Activated B cell treated with CpG ODN at 0.5 μM for 24 hours (primary cell): ENCODE measurements at regions of chr13 and their contacts with region 1.

Region 1: GRCh38 chr13:38530492-38530891 is 156.4 kb upstream of the FREM2 start:
- DNase-seq: no peak
- ATAC-seq: no peak
- H3K4me3 Mint-ChIP-seq: no peak overlapping the region
- H3K27ac Mint-ChIP-seq: no peak overlapping the region
- H3K4me1 Mint-ChIP-seq: no peaks in the 10 kb centered on the region
- H3K27me3 Mint-ChIP-seq: no peaks in the 10 kb centered on the region
- CTCF ChIP-seq: no peak

Region 2: GRCh38 chr13:36858290-36858689 is 1672.2 kb before region 1 on chr13:
- CTCF ChIA-PET with region 1: no interaction called
- POLR2A ChIA-PET with region 1: no interaction called
- intact Hi-C with region 1: loop called (anchors 2 kb)
- DNase-seq: no peak
- ATAC-seq: no peak
- H3K4me3 Mint-ChIP-seq: no peak overlapping the region
- H3K27ac Mint-ChIP-seq: no peak overlapping the region
- H3K4me1 Mint-ChIP-seq: no peaks in the 10 kb centered on the region
- H3K27me3 Mint-ChIP-seq: peaks cover 11% of the 10 kb centered on the region
- CTCF ChIP-seq: no peak

Region 3: DNA sequence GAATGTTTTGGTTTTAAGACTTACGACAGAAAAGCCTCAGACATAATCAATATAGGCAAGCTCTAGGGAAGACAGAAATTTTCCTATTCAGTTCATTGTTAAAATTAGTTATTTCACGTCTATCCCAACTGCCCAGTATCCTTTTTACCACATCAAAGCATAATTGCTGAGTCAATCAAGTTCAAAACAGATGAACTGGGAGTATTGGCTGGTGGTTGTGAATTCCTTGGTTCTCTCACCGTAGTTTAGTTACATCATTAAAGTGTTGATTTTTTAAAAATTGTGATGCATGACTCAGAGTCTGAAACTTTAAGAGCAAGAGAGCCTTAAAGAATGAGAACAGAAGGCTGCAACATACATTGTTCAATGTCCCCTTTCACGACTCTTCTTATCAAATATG is 13.1 kb after region 1 on chr13:
- CTCF ChIA-PET with region 1: no interaction called
- POLR2A ChIA-PET with region 1: no interaction called
- intact Hi-C with region 1: loop called (anchors 1 kb)
- DNase-seq: no peak
- ATAC-seq: no peak
- H3K4me3 Mint-ChIP-seq: no peak overlapping the region
- H3K27ac Mint-ChIP-seq: no peak overlapping the region
- H3K4me1 Mint-ChIP-seq: no peaks in the 10 kb centered on the region
- H3K27me3 Mint-ChIP-seq: no peaks in the 10 kb centered on the region
- CTCF ChIP-seq: no peak